Caco-2 (cell line): ENCODE measurements at regions of chr11 and their contacts with region 1.

Region 1: GRCh38 chr11:26649884-26650283 is 72.0 kb downstream of the SLC5A12 start:
- DNase-seq: peak; percentile 69 to 73
- H3K4me3 ChIP-seq: no peak overlapping the region
- H3K4me3 Mint-ChIP-seq: no peak overlapping the region
- H3K27ac Mint-ChIP-seq: no peak overlapping the region
- H3K4me1 ChIP-seq: no peaks in the 10 kb centered on the region
- H3K4me1 Mint-ChIP-seq: peaks cover 5% of the 10 kb centered on the region
- H3K27me3 ChIP-seq: no peaks in the 10 kb centered on the region
- H3K27me3 Mint-ChIP-seq: peaks cover 4% of the 10 kb centered on the region
- CTCF ChIP-seq: peak; percentile 76 to 87

Region 2: GRCh38 chr11:26297189-26297975 is 352.5 kb before region 1 on chr11:
- CTCF ChIA-PET with region 1: no interaction called
- POLR2A ChIA-PET with region 1: no interaction called
- intact Hi-C with region 1: loop called (anchors 1 kb)
- DNase-seq: peak in 1 of 2 experiments; percentile 36
- H3K4me3 ChIP-seq: no peak overlapping the region
- H3K4me3 Mint-ChIP-seq: no peak overlapping the region
- H3K27ac Mint-ChIP-seq: no peak overlapping the region
- H3K4me1 ChIP-seq: no peaks in the 10 kb centered on the region
- H3K4me1 Mint-ChIP-seq: no peaks in the 10 kb centered on the region
- H3K27me3 ChIP-seq: no peaks in the 10 kb centered on the region
- H3K27me3 Mint-ChIP-seq: peaks cover 2% of the 10 kb centered on the region
- CTCF ChIP-seq: peak; percentile 36 to 62

Region 3: GRCh38 chr11:26507229-26507628 is 142.7 kb before region 1 on chr11:
- CTCF ChIA-PET with region 1: no interaction called
- POLR2A ChIA-PET with region 1: no interaction called
- intact Hi-C with region 1: no loop called
- DNase-seq: no peak
- H3K4me3 ChIP-seq: no peak overlapping the region
- H3K4me3 Mint-ChIP-seq: no peak overlapping the region
- H3K27ac Mint-ChIP-seq: no peak overlapping the region
- H3K4me1 ChIP-seq: no peaks in the 10 kb centered on the region
- H3K4me1 Mint-ChIP-seq: no peaks in the 10 kb centered on the region
- H3K27me3 ChIP-seq: no peaks in the 10 kb centered on the region
- H3K27me3 Mint-ChIP-seq: peaks cover 13% of the 10 kb centered on the region
- CTCF ChIP-seq: no peak

Region 4: DNA sequence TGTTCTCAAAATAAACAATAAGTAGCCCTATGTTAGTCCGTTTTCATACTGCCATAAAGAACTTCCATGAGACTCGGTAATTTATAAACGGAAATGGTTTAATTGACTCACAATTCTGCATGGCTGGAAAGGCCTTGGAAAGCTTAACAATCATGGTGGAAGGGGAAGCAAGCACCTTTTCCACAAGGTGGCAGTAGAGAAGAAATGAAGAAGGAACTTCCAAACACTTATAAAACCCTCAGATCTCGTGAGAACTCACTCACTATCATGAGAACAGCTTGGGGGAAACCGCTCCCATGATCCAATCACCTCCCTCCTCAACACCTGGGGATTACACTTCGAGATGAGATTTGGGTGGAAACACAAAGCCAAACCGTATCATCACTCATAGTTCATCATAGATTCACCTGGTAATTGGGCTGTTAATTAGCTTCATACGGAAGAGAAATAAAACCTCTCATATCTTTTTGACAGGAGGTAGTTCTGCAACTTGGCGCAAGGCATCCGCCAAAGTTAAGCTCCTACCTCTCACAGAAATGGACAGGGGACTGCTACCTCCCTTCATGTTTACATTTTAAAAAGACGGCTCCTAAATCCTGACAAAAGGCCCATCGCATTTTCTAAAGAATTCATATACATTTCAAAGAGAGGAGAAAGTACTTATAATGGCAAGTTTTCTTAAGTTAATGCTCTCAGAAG is 126.8 kb before region 1 on chr11:
- CTCF ChIA-PET with region 1: no interaction called
- POLR2A ChIA-PET with region 1: no interaction called
- intact Hi-C with region 1: loop called (anchors 1 kb)
- DNase-seq: peak in 1 of 2 experiments; percentile 28
- H3K4me3 ChIP-seq: no peak overlapping the region
- H3K4me3 Mint-ChIP-seq: no peak overlapping the region
- H3K27ac Mint-ChIP-seq: no peak overlapping the region
- H3K4me1 ChIP-seq: no peaks in the 10 kb centered on the region
- H3K4me1 Mint-ChIP-seq: no peaks in the 10 kb centered on the region
- H3K27me3 ChIP-seq: no peaks in the 10 kb centered on the region
- H3K27me3 Mint-ChIP-seq: peaks cover 4% of the 10 kb centered on the region
- CTCF ChIP-seq: peak; percentile 23 to 25

Region 5: DNA sequence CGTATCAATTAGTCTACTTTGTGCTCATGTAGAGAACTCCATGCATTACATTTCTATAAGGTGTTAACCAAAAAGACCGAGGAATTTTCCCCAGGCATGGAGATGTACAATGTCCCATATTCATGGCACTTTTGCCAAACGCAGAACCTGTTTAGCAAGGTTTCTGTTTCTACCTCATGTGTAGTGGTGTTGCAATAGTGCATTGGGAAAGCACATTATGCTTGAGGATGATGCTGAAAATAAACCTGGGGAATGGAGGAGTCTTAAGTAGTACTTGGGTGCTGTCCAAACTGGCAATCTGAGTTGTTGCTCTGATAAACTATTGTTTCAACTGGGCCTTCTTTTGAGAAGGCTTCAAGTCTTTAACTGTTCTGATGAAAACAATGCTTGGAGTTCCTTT is 66.3 kb before region 1 on chr11:
- CTCF ChIA-PET with region 1: no interaction called
- POLR2A ChIA-PET with region 1: no interaction called
- intact Hi-C with region 1: no loop called
- DNase-seq: peak in 1 of 2 experiments; percentile 36
- H3K4me3 ChIP-seq: no peak overlapping the region
- H3K4me3 Mint-ChIP-seq: no peak overlapping the region
- H3K27ac Mint-ChIP-seq: no peak overlapping the region
- H3K4me1 ChIP-seq: no peaks in the 10 kb centered on the region; the same call in 1 of the 2 replicates
- H3K4me1 Mint-ChIP-seq: no peaks in the 10 kb centered on the region
- H3K27me3 ChIP-seq: no peaks in the 10 kb centered on the region
- H3K27me3 Mint-ChIP-seq: no peaks in the 10 kb centered on the region
- CTCF ChIP-seq: no peak

Region 6: GRCh38 chr11:26730414-26731080 is 80.7 kb after region 1 on chr11:
- CTCF ChIA-PET with region 1: no interaction called
- POLR2A ChIA-PET with region 1: no interaction called
- intact Hi-C with region 1: no loop called
- DNase-seq: no peak
- H3K4me3 ChIP-seq: no peak overlapping the region
- H3K4me3 Mint-ChIP-seq: no peak overlapping the region
- H3K27ac Mint-ChIP-seq: no peak overlapping the region
- H3K4me1 ChIP-seq: no peaks in the 10 kb centered on the region
- H3K4me1 Mint-ChIP-seq: no peaks in the 10 kb centered on the region
- H3K27me3 ChIP-seq: no peaks in the 10 kb centered on the region
- H3K27me3 Mint-ChIP-seq: peaks cover 4% of the 10 kb centered on the region
- CTCF ChIP-seq: no peak

Region 7: GRCh38 chr11:26827567-26828081 is 177.7 kb after region 1 on chr11:
- CTCF ChIA-PET with region 1: no interaction called
- POLR2A ChIA-PET with region 1: no interaction called
- intact Hi-C with region 1: no loop called
- DNase-seq: no peak
- H3K4me3 ChIP-seq: no peak overlapping the region
- H3K4me3 Mint-ChIP-seq: no peak overlapping the region
- H3K27ac Mint-ChIP-seq: no peak overlapping the region
- H3K4me1 ChIP-seq: no peaks in the 10 kb centered on the region
- H3K4me1 Mint-ChIP-seq: no peaks in the 10 kb centered on the region
- H3K27me3 ChIP-seq: no peaks in the 10 kb centered on the region
- H3K27me3 Mint-ChIP-seq: no peaks in the 10 kb centered on the region
- CTCF ChIP-seq: no peak